ENCODE measurements at regions of chr4 and their contacts with region 1.

Region 1: DNA sequence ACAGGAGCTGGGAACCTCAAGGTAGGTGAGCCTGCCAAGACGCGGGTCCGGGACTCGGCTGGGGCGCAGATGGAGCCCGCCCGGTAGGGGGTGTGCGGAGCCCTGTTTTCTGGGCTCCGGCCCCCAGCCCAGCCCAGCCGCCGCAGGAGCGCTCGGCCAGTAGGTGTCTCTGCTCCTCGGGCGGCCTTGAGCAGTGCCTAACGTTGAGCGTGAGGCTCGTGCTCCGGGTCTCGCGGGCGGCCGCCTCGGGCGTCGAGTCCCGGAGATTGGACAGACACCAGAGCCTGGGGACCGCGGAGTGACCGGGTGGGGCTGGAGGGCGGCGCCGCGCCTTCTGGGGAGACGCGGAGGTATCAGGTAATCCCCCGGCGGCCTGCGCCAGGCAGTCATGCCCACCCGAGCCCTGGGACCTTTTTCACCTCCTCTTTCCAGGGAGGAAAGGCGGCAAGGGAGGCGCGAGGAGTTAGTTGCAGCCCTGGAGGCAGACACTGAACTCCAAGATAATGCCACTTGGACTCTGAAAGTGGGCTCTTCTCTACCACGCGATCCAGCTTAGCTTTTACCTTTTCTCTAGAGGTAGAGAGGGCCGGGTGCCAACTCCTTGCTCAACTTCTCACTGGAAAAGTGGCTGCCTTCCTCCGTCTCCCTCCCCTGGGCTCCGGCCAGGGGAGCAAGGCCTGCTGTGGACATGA is 14.5 kb upstream of the FGG start:
- DNase-seq: peak; percentile 63
- ATAC-seq: peak; percentile 96
- H3K4me3 ChIP-seq: peak overlapping the region; percentile 37 to 52
- H3K27ac ChIP-seq: no peak overlapping the region; the same call in 1 of the 2 replicates
- H3K4me1 ChIP-seq: peaks cover 6 to 21% of the 10 kb centered on the region in 2 experiments; a peak in 3 of 4 replicates
- H3K27me3 ChIP-seq: no peaks in the 10 kb centered on the region
- CTCF ChIP-seq: peak; percentile 77 to 98 (median 77)
- POLR2A ChIP-seq: no peak
- RAD21 ChIP-seq: peak; percentile 84

Region 2: DNA sequence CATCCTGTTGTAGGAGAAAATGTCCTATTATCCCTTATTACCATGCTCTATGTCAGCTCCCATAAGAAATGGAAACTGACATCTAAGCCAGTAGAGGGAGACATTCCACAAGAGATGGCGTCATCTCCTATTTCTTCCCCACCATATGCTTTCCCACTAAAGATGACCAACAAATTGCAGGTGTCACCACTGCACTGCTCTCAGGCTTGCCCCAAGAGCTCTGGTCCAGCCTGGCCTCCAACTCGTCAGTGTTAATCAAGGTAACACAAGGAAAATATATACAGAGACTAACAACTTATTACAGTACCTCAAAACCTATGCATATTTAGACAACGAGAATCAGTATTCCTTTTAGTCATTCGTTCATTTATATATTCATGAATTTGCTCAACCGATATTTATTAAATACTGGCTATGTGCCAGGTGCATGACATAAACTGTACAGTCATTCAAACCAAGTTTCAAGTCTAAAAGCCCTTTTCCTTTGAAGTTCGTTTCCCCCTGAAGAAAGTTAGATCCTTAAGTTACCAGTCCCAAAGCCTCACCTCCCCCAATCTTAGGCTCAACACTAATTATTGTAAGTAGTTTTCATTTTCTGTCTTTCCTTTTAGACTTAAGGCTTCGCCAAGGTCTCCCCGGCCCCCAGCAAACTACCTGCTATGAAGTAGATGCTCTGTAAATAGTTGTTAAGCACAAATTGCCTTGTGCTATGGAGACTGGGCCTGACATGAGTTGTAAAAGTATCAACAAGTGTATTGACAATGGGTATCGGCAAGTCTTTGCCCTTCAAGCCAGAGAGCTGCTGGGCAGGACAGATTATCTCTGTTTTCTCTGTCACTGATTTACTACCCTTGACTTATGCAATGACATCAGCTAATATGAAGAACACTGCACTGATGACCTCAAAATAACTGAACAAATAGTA is 67.2 kb before region 1 on chr4:
- CTCF ChIA-PET with region 1: interaction called, 67 read pairs
- POLR2A ChIA-PET with region 1: no interaction called
- RAD21 ChIA-PET with region 1: interaction called, 3 to 4 read pairs
- intact Hi-C with region 1: loop called (anchors 1 kb)
- DNase-seq: peak; percentile 44
- ATAC-seq: peak; percentile 95
- H3K4me3 ChIP-seq: no peak overlapping the region
- H3K27ac ChIP-seq: no peak overlapping the region
- H3K4me1 ChIP-seq: no peaks in the 10 kb centered on the region
- H3K27me3 ChIP-seq: no peaks in the 10 kb centered on the region
- CTCF ChIP-seq: peak; percentile 53 to 76 (median 65)
- POLR2A ChIP-seq: no peak
- RAD21 ChIP-seq: peak; percentile 83

Region 3: DNA sequence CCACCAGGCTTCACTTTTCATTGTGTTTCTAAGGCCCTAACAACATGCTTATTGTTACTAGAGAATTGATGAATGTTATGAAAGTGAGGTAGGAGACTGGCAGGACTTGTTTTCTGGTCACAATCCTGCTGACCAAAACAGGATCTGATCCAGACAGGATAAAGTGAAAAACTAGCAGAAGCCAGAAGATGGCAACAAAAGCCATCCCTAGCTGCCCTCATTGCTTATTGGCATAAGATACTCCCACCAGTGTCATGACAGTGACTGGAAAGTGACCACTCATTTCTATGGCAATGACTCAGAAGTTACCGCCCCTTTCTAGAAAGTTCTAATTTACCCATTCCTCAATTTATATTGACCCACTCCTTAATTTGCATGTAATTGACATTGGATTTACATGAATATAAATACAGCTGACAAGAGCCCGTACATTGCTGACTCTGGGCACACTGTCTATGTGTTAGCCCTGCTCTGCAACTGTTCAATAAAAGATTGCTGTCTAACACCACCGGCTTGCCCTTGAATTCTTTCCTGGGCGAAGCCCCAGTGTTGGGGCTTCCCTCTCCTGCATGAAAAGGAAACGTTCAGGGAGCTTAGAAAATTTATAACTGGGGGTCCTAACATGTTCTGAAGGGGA is 15.6 kb after region 1 on chr4:
- CTCF ChIA-PET with region 1: interaction called, 12 read pairs
- POLR2A ChIA-PET with region 1: no interaction called
- RAD21 ChIA-PET with region 1: no interaction called
- intact Hi-C with region 1: no loop called
- DNase-seq: no peak
- ATAC-seq: peak; percentile 49
- H3K4me3 ChIP-seq: no peak overlapping the region
- H3K27ac ChIP-seq: no peak overlapping the region
- H3K4me1 ChIP-seq: peaks cover 0 to 7% of the 10 kb centered on the region in 2 experiments; a peak in 2 of 4 replicates
- H3K27me3 ChIP-seq: no peaks in the 10 kb centered on the region
- CTCF ChIP-seq: 0 out of 6 replicates have a peak, but pooled peaks of 1 of the 3 experiments have one; percentile 12
- POLR2A ChIP-seq: no peak
- RAD21 ChIP-seq: peak; percentile 41

Region 4: DNA sequence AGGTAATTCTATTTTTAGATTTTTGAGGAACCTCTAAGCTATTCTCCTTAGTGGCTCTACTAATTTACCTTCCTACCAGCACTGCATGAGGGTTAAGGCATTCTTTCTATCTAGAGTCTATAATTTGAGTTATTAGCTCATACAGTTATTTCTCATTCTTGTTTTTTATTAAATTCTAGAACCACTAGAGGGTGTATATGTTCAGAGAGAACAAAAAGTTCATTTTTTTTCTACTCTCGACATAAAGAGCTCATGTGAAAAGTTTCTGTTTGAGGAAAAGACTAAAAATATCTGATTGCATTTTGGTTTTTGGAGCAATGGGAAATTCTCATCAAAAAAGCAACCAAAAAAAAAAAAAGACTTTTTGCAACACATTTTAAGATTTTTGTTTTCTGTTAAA is 59.9 kb after region 1 on chr4:
- CTCF ChIA-PET with region 1: no interaction called
- POLR2A ChIA-PET with region 1: no interaction called
- RAD21 ChIA-PET with region 1: no interaction called
- intact Hi-C with region 1: no loop called
- DNase-seq: no peak
- ATAC-seq: no peak
- H3K4me3 ChIP-seq: no peak overlapping the region
- H3K27ac ChIP-seq: no peak overlapping the region
- H3K4me1 ChIP-seq: no peaks in the 10 kb centered on the region
- H3K27me3 ChIP-seq: no peaks in the 10 kb centered on the region
- CTCF ChIP-seq: peak; percentile 7 to 46 (median 26); a peak in 3 of 6 replicates
- POLR2A ChIP-seq: no peak
- RAD21 ChIP-seq: peak; percentile 46

Region 5: DNA sequence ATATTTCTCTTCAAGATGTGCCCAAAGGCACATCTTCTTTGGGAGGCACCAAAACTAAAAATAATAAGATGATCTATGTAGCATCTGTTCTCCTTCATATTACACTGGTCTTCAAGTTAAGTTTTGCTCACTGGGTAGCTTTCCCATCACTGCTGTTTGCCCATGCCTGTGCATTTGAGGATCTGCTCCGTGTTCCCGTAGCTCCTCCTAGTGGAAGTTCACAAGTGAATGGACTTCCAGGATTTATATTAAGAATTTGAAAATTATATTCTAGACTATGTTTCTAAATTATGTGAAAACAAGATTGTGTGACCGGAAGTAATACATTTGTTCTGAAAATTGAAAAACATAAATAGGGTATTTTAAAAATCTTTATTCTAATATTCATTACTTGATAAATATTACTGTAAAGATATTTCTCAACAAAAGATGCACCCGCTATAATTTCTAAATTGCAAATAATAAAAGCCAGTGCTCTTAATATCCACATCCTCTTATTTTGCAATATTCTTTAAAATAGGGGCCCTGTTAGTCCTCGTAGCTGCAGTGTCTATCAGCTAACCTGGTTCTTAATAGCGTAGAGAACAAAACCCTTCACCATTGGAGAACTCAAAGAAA is 301.8 kb after region 1 on chr4:
- CTCF ChIA-PET with region 1: no interaction called
- POLR2A ChIA-PET with region 1: no interaction called
- RAD21 ChIA-PET with region 1: no interaction called
- intact Hi-C with region 1: loop called (anchors 2 kb)
- DNase-seq: peak; percentile 43
- ATAC-seq: peak; percentile 81
- H3K4me3 ChIP-seq: no peak overlapping the region
- H3K27ac ChIP-seq: no peak overlapping the region
- H3K4me1 ChIP-seq: no peaks in the 10 kb centered on the region
- H3K27me3 ChIP-seq: no peaks in the 10 kb centered on the region
- CTCF ChIP-seq: peak; percentile 55 to 93 (median 63)
- POLR2A ChIP-seq: no peak
- RAD21 ChIP-seq: peak; percentile 85